ENCODE measurements at regions of chr10 and their contacts with region 1.

Region 1: DNA sequence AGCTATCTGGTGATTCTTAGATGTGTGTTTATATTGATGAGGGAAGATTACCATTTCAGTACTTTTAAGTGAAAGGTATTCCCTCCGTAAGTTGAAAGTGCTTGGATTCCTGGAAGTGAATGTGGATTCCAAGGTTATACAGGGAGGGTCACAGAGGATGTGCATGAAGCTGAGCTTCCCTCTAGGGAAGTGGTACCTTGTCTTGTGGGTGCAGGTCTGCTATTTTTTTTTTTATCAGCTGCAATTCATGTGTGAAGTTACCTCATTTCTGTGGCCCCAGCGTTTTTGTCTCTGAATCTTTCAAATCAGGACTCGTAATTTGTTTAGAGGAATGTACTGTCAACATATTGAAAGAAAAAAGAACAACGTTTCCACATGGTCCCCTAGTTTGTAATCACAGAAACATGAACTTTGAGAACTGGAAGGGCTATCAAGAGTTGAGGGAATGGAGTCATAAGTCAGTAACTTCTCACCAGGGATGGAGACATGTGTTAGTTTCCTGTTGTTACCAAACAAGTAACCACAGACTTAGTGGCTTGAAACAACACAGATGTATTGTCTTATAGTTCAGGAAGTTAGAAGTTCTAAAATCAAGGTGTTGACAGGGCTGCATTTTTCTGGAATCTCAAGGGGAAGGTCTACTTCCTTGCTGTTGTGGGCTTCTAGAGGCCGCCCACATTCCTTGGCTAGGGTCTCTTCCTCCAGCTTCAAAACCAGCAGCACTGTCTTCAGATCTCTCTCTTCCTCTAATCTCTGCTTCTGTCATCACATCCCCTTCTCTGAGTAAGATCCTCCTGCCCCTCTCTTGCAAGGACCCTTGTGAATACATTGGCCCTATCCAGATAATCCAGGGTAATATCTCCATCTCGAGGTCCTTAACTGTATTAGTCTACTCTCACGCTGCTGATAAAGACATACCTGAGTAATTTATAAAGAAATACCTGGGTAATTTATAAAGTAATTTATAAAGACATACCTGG is 64.4 kb downstream of the RAB18 start:
- DNase-seq: no peak
- ATAC-seq: peak; percentile 35 to 71 (median 50)
- H3K4me3 ChIP-seq: no peak overlapping the region
- H3K27ac ChIP-seq: no peak overlapping the region
- H3K4me1 ChIP-seq: peaks cover 0 to 15% (median 0%) of the 10 kb centered on the region in 12 donors
- H3K27me3 ChIP-seq: no peaks in the 10 kb centered on the region
- CTCF ChIP-seq: no peak
- POLR2A ChIP-seq: no peak

Region 2: DNA sequence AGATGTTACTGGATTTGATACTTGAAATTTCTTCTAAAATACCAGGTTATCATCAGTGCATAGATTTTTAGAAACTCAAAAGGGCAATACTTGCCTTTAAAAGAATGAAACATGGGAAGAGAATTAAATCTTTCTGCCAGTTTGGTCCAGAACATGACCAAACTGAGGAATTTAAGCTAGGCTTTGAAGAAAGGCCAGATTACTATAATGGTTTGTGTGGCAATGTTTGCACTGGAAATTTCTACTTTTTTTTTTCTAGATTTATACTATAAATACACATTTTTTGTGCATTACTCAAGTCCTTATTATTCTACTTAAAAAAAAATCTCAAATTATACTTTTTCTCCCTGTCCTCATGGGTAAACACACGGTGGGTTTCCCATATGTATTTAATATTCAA is 167.9 kb after region 1 on chr10:
- intact Hi-C with region 1: loop called in 1 of 10 experiments (anchors 5 kb)
- DNase-seq: no peak
- ATAC-seq: no peak
- H3K4me3 ChIP-seq: no peak overlapping the region
- H3K27ac ChIP-seq: no peak overlapping the region
- H3K4me1 ChIP-seq: peaks cover 0 to 4% (median under 1%) of the 10 kb centered on the region in 12 donors
- H3K27me3 ChIP-seq: peaks cover 1 to 25% (median 8%) of the 10 kb centered on the region in 9 donors
- CTCF ChIP-seq: no peak
- POLR2A ChIP-seq: no peak